PC-3 (cell line): ENCODE measurements at regions of chr9 and their contacts with region 1.

Region 1: DNA sequence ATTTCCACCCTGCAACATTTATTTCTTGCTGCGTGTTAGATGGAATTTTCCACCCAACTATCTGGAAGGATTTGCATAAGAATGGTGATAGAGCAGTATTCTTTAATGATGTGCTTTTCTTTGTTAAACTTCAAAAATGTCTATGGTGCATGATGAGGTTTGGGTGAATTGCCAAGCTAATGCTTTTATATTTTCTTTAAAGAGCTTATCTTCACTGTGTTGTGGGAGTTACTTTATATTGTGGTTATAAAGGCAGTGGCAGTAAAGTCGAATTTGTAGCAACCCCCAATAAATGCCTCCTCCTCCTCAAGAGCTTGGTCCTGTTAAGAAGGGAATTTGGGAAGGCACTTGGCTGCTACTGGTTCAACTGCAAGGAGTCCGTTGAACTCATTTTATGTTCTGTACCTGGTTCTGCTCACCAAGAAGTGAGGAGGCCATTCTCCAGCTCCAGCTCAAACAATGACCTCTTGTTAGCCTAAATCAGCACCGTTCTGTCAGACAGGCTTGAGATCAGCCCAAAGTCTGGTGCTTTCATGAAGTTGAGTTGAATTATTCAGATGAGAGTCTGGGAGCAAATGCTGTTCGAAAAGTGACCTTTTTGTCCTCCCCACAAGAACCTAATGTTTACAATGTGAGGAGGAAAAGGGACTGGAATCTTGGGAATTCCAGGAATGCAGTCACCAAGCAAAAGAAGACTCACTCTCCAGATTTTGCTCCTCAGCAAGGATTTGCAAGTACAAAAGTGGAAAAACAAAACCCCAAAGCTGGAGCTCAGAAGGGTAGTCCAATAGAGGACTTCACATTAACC is 217.0 kb downstream of the TMEM38B start:
- DNase-seq: peak; percentile 65
- ATAC-seq: peak; percentile 21
- H3K4me3 ChIP-seq: peak overlapping the region; percentile 4; the same call in 1 of the 2 replicates
- H3K27ac ChIP-seq: no peak overlapping the region
- H3K4me1 ChIP-seq: peaks cover 40% of the 10 kb centered on the region
- H3K27me3 ChIP-seq: no peaks in the 10 kb centered on the region
- CTCF ChIP-seq: no peak

Region 2: GRCh38 chr9:106059886-106060285 is 148.6 kb after region 1 on chr9:
- CTCF ChIA-PET with region 1: no interaction called
- POLR2A ChIA-PET with region 1: no interaction called
- intact Hi-C with region 1: loop called (anchors 5 kb)
- DNase-seq: no peak
- ATAC-seq: no peak
- H3K4me3 ChIP-seq: no peak overlapping the region
- H3K27ac ChIP-seq: no peak overlapping the region
- H3K4me1 ChIP-seq: peaks cover 24% of the 10 kb centered on the region
- H3K27me3 ChIP-seq: no peaks in the 10 kb centered on the region
- CTCF ChIP-seq: no peak